ENCODE measurements at regions of chr2 and their contacts with region 1.

Region 1: GRCh38 chr2:121649596-121650314 is 493 bp upstream of the CLASP1 start:
- DNase-seq: peak; percentile 68 to 99 (median 97)
- ATAC-seq: peak; percentile 92 to 94
- H3K4me3 Mint-ChIP-seq: peak overlapping the region; percentile 91 to 100 (median 99)
- H3K27ac Mint-ChIP-seq: peak overlapping the region; percentile 97 to 100 (median 99)
- H3K4me1 Mint-ChIP-seq: peaks cover 47 to 82% (median 78%) of the 10 kb centered on the region in 4 donors
- H3K27me3 Mint-ChIP-seq: peaks cover 0 to 3% (median 0%) of the 10 kb centered on the region in 5 donors

Region 2: DNA sequence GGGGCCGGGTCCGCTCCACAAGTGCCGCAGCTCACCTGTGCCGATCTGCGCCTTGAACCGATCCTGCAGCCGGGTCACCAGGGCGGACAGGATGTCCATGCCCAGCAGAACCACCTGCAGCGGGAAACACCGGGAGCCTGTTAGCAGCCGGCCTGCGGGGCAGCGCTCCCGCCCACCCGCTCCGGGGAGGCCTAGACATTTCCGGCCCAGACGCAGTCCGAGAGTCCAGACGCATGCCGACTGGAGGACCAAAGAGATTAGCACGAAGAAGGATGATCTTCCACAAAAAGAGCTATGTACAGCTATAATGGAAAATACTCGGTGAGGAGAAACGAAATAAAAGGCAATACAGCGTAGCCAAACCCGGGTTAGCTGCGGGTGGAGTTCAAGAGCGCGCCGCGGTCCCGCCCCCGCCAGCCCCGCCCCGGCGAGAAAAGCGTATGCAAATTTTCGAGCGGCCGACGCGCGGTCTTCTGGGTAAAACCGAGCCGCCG is 119.5 kb before region 1 on chr2:
- POLR2A ChIA-PET with region 1: interaction called, 105 read pairs
- DNase-seq: peak in 7 of 10 donors; percentile 71 to 90 (median 81)
- ATAC-seq: peak; percentile 70 to 72
- H3K4me3 Mint-ChIP-seq: peak overlapping the region; percentile 88 to 97 (median 95)
- H3K27ac Mint-ChIP-seq: peak overlapping the region; percentile 95 to 100 (median 99)
- H3K4me1 Mint-ChIP-seq: peaks cover 15 to 47% (median 35%) of the 10 kb centered on the region in 4 donors
- H3K27me3 Mint-ChIP-seq: no peaks in the 10 kb centered on the region

Region 3: GRCh38 chr2:121583555-121583954 is 66.2 kb before region 1 on chr2:
- POLR2A ChIA-PET with region 1: no interaction called
- DNase-seq: no peak
- ATAC-seq: no peak
- H3K4me3 Mint-ChIP-seq: no peak overlapping the region
- H3K27ac Mint-ChIP-seq: no peak overlapping the region
- H3K4me1 Mint-ChIP-seq: peaks cover 23 to 49% (median 36%) of the 10 kb centered on the region in 4 donors
- H3K27me3 Mint-ChIP-seq: no peaks in the 10 kb centered on the region

Region 4: DNA sequence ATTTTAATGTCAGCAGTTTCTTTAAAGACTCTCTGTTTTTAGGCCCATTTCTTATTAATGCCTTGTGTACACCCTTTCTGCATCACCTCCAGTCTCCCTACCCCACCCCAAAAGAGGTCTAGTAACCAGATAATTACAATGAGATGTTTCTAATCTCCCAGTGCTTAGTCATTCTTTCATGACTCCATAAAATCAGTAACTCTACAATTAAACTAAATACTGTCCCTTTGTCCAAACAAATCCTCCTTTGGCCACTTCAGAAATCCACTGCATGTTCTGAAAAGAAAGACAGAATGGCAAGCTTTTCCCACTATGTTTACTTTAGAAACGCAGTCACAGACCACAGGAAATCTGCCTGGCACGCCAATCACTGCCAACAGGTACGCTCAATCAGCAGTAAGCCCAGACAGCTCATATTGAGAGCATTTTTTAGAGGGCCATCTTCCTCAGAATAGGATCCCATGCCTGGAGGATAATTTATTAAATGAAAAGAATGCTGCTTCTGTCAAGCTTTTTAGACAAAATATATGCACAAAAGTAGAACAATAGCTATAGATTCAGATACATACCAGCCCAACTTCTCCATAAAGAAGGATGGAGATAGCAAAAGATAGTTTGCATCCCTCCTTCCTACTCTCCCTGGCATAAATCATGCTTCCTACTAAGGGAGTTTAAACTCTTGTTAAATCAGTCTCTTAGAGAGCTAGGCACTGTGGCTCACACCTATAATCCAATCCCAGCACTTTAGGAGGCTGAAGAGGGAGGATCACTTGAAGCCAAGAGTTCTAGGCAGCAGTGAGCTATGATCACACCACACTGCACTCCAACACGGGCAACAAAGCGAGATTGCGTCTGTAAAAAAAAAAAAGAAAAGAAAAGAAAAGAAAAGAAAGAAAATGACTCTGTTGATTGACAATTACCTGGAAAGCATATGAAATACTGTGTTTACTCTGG is 15.1 kb before region 1 on chr2:
- POLR2A ChIA-PET with region 1: interaction called, 11 read pairs
- DNase-seq: no peak
- ATAC-seq: peak; percentile 42 to 55
- H3K4me3 Mint-ChIP-seq: peak overlapping the region in 7 of 10 donors; percentile 1 to 66 (median 13)
- H3K27ac Mint-ChIP-seq: peak overlapping the region; percentile 45 to 78 (median 63)
- H3K4me1 Mint-ChIP-seq: peaks cover 19 to 48% (median 39%) of the 10 kb centered on the region in 4 donors
- H3K27me3 Mint-ChIP-seq: no peaks in the 10 kb centered on the region

Region 5: DNA sequence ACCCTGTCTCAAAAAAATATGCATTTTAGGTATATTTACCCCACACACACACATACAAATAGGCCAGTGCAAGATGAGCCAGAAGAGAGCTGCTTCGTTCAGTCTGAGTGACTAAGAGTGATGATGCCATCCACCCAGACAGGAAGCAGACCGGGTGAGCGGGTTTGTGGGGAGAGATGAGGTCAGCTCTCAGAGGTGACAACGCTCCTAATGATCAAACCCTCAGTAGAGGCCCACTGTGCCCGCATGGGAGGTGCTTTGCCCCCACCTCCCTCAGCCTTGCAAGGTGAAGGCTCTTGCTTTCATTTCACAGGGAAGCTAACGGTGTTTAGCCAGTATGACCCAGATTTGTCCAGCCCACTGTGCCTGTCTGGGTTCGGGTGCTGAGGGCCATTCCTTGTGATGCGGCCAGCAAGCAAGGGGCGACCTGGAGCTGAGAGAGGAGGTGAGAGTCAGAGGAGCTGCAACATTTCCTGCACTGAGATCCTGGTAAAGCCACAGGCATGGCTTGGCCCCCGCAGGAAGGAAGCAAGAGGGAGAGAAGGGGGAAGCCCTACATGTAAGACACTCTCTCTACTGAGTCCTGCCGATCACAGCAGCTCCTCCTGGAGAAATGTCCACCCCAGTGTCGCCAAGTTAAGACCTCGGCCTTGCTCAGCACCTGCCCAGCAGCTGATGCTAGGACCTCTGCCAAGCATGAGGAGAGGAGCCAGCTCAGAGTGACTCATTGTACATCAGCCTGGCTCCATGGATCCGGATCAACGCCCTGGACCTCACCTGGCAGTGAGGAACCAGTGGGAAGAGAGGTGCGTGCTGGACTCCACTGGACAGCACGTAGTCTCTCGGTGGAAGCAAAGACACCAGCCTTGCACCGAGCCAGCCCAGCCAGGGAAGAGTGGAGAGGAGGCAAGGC is 49.9 kb after region 1 on chr2:
- POLR2A ChIA-PET with region 1: interaction called, 17 read pairs
- DNase-seq: peak; percentile 41 to 88 (median 74)
- ATAC-seq: peak; percentile 97 to 98
- H3K4me3 Mint-ChIP-seq: peak overlapping the region; percentile 68 to 95 (median 86)
- H3K27ac Mint-ChIP-seq: peak overlapping the region; percentile 92 to 97 (median 96)
- H3K4me1 Mint-ChIP-seq: peaks cover 17 to 39% (median 34%) of the 10 kb centered on the region in 4 donors
- H3K27me3 Mint-ChIP-seq: no peaks in the 10 kb centered on the region

Region 6: DNA sequence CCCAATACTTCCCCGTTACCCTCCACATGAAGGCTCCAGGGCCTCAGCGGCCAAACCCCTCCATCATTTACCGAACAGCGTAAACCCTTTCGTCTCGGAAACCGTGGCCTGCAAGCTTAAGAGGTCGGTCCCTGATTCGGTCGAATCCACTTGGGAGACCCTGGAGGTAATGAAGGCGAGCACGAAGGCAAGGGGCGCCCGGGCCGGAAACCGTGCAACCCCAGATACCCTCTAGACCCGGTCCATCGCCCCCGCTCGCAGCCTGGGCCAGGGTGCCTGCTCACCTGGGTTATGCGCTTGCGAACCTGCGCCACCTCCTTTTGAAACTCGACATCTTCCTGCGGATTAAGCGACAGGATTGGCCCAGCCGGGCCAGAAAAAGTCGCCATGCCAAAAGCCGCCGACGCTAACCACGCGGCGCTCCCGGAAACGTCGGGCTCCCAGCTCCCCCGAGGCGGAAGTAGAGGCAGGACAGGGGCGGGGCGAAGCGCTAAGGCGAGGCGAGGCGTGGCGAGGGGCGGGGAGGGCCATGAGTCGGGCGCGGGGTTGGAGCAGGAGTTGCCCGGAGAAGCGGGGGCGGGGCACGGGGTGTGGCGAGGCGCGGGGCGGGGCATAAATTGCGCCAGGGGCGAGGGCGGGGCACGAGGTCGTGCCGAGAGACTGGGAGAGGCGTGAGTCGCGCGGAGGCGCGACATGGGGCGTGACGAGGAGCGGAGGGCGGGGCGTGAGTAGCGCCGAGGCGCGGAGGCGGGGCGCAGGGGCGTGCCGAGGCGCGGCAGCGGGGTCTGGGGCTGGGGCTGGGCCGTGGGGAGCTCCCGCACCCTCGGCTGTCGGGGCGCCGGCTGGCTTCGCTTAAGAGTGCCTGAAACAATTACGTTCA is 86.9 kb after region 1 on chr2 and contains the start of gene NIFK:
- POLR2A ChIA-PET with region 1: interaction called, 37 read pairs
- DNase-seq: peak; percentile 97 to 100 (median 100)
- ATAC-seq: peak; percentile 85 to 86
- H3K4me3 Mint-ChIP-seq: peak within 1 kb of the TSS; percentile 94 to 100 (median 96)
- H3K27ac Mint-ChIP-seq: peak within 1 kb of the TSS; percentile 85 to 99 (median 97)
- H3K4me1 Mint-ChIP-seq: peaks cover 16 to 60% (median 54%) of the 10 kb centered on the region in 4 donors
- H3K27me3 Mint-ChIP-seq: no peaks in the 10 kb centered on the region
- polyA plus RNA-seq, gene NIFK: 62.8 to 88.6 (median 77.1) TPM

Region 7: DNA sequence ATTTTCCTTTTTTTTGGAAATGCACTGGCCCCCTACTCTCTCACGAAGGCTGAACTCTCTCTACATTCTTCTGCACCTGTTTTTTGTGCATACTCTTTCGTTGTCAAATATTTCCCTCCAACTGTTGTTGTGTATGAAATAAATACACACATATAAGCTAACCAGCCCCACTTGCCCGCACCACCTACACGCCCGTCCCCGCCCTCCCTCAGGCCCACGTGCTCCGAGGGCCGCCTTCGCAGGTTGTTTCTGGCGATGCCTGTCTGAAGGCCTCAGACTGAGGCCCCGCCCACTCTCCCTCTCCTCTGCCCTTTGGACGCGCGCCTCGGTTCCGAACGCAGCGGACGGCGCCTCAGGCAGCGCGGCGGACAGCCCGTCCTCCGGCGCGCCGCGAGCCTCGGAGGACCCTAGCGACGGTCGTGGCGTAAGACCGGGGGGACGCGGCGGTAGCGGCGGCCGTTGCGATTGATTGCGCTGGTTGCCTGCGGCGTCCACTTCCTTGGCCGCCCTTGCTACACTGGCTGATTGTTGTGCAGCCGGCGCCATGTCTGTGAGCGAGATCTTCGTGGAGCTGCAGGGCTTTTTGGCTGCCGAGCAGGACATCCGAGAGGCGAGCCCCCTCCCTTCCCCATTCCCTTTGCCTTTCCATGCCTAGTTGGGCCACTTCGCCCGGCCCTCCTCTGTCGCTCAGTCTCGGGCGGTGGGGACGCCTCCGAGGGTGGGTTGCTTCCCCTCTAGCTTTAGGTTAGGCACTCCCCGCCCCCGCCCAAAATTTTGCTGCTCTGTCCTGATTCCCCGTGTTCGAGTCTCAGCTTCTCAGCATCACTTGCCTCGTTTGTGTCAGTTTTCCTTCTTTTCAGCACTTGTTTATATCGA is 105.7 kb after region 1 on chr2 and contains the start of gene TSN:
- POLR2A ChIA-PET with region 1: interaction called, 12 read pairs
- DNase-seq: peak; percentile 92 to 98 (median 96)
- ATAC-seq: peak; percentile 99
- H3K4me3 Mint-ChIP-seq: peak within 1 kb of the TSS; percentile 92 to 100 (median 96)
- H3K27ac Mint-ChIP-seq: peak within 1 kb of the TSS; percentile 86 to 99 (median 94)
- H3K4me1 Mint-ChIP-seq: peaks cover 9 to 37% (median 29%) of the 10 kb centered on the region in 4 donors
- H3K27me3 Mint-ChIP-seq: no peaks in the 10 kb centered on the region
- polyA plus RNA-seq, gene TSN: 74.8 to 90.9 (median 79.2) TPM